HepG2 (cell line): ENCODE measurements at regions of chr4 and their contacts with region 1.

Region 1: GRCh38 chr4:98467627-98468072 is 190.8 kb downstream of the TSPAN5 start:
- DNase-seq: peak; percentile 78
- ATAC-seq: peak; percentile 99
- H3K4me3 ChIP-seq: peak overlapping the region in 2 of 3 experiments; percentile 35 to 56; a peak in 5 of 6 replicates
- H3K27ac ChIP-seq: no peak overlapping the region
- H3K4me1 ChIP-seq: no peaks in the 10 kb centered on the region
- H3K27me3 ChIP-seq: peaks cover 2 to 6% of the 10 kb centered on the region in 2 experiments; a peak in 1 of 5 replicates
- CTCF ChIP-seq: peak; percentile 90
- EP300 ChIP-seq: no peak
- POLR2A ChIP-seq: no peak
- RAD21 ChIP-seq: peak; percentile 68

Region 2: DNA sequence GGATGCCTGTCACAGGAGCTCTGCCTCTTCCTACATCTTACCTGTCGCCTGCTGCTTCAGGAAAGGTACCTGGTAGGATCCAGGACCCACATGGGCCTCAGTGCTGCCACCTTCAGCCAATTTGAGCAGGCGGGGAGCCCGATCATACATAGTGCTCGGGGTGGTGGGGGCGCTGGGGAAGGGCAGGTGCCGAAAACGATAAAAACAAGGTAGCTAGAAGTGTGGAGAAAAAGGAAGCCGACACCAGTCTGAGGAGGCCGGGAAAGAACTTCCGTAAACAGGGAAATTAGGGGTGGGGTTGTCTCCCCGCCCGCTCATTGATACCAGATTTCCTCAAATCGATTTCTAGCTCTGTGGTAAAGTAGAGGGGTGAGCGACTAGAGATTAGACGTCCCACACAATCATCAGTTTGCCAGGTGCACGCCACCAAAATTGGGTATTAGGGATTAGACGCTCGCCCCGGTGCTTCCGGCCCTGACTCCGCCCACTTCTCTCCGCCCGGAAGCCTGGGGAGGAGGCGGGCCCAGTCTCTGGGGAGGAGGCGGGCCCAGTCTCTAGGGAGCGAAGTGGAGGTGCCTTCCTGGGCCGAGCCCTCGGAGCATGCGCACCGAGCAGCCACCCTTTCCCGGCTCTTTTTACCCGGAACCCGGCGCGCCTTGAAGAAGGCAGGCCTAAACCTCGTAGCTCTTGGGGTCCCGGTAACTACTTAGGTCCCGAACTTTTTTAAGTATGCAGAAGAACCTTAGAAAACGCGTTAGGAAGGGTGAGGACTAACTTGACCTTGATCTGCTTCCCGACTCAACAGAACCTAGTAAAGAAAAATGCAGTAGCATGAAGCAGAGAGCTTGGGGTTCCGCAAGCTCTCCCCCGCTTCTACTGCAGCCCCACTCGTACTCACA is 324.4 kb before region 1 on chr4 and contains the start of gene STPG2:
- CTCF ChIA-PET with region 1: no interaction called
- POLR2A ChIA-PET with region 1: interaction called, 3 read pairs
- in situ Hi-C with region 1: no loop called
- intact Hi-C with region 1: loop called (anchors 10 kb)
- DNase-seq: peak; percentile 79
- ATAC-seq: peak; percentile 100
- H3K4me3 ChIP-seq: peak within 1 kb of the TSS; percentile 75 to 83 (median 76)
- H3K27ac ChIP-seq: peak within 1 kb of the TSS; percentile 35
- H3K4me1 ChIP-seq: peaks cover 13% of the 10 kb centered on the region
- H3K27me3 ChIP-seq: no peaks in the 10 kb centered on the region; a peak in 1 of 5 replicates
- CTCF ChIP-seq: peak; percentile 52
- EP300 ChIP-seq: no peak
- POLR2A ChIP-seq: peak in 1 of 2 experiments; percentile 30; a peak in 1 of 4 replicates
- RAD21 ChIP-seq: no peak
- total RNA-seq, gene STPG2: 0.07 TPM in 1 of 2 replicates, not detected in the other

Region 3: GRCh38 chr4:98802770-98803198 is 335.1 kb after region 1 on chr4:
- CTCF ChIA-PET with region 1: no interaction called
- POLR2A ChIA-PET with region 1: no interaction called
- in situ Hi-C with region 1: no loop called
- intact Hi-C with region 1: no loop called
- DNase-seq: no peak
- ATAC-seq: no peak
- H3K4me3 ChIP-seq: no peak overlapping the region
- H3K27ac ChIP-seq: no peak overlapping the region
- H3K4me1 ChIP-seq: no peaks in the 10 kb centered on the region
- H3K27me3 ChIP-seq: no peaks in the 10 kb centered on the region
- CTCF ChIP-seq: no peak
- EP300 ChIP-seq: no peak
- POLR2A ChIP-seq: no peak
- RAD21 ChIP-seq: no peak

Region 4: GRCh38 chr4:98828801-98829200 is 361.2 kb after region 1 on chr4:
- CTCF ChIA-PET with region 1: no interaction called
- POLR2A ChIA-PET with region 1: no interaction called
- in situ Hi-C with region 1: loop called (anchors 25 kb)
- intact Hi-C with region 1: no loop called
- DNase-seq: peak; percentile 3
- ATAC-seq: peak; percentile 54
- H3K4me3 ChIP-seq: no peak overlapping the region
- H3K27ac ChIP-seq: no peak overlapping the region
- H3K4me1 ChIP-seq: no peaks in the 10 kb centered on the region
- H3K27me3 ChIP-seq: no peaks in the 10 kb centered on the region
- CTCF ChIP-seq: peak; percentile 27; the same call in 1 of the 2 replicates
- EP300 ChIP-seq: no peak
- POLR2A ChIP-seq: no peak
- RAD21 ChIP-seq: no peak